ENCODE measurements at regions of chr16 and their contacts with region 1.

Region 1: DNA sequence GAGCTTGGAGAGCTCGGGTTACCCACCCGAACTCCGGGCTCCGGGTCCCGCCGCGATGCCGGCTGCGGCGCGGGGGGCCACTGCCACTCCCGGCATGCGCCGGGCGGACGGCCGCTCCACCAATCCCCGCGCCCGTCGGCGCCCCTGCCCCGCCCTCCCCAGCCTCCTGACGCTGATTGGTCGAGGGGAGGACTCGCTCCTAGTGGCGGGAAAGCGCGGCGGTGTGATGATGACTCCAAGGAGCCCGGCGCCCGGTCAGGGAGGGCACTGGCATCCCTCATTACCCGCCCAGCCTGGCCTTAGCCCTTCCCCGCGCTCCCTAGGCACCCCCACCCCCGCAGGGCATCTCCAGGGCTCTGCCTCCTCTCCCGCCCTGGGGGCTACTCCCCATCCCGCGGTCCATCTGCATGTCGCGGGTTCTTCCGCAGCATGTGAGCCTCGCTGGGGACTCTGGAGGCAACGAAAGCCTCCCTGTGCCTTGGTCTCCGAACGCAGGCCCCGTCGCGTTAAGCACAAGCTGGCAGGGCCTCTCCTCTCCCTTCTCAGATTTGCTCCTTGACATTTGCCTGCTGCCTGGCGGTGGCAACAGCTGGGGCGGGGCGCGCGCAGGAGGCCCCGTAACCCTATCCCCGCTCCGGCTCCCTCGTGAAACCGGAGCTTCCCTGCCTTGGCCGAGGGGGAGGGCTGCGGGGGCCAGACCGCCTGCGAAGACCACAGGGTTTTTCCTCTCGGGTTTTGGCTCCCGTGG is 1.7 kb downstream of the ATP2A1 start:
- DNase-seq: peak; percentile 94
- H3K4me3 ChIP-seq: peak overlapping the region; percentile 61
- H3K27ac ChIP-seq: peak overlapping the region; percentile 60
- H3K4me1 ChIP-seq: no peaks in the 10 kb centered on the region
- H3K27me3 ChIP-seq: no peaks in the 10 kb centered on the region
- CTCF ChIP-seq: no peak

Region 2: DNA sequence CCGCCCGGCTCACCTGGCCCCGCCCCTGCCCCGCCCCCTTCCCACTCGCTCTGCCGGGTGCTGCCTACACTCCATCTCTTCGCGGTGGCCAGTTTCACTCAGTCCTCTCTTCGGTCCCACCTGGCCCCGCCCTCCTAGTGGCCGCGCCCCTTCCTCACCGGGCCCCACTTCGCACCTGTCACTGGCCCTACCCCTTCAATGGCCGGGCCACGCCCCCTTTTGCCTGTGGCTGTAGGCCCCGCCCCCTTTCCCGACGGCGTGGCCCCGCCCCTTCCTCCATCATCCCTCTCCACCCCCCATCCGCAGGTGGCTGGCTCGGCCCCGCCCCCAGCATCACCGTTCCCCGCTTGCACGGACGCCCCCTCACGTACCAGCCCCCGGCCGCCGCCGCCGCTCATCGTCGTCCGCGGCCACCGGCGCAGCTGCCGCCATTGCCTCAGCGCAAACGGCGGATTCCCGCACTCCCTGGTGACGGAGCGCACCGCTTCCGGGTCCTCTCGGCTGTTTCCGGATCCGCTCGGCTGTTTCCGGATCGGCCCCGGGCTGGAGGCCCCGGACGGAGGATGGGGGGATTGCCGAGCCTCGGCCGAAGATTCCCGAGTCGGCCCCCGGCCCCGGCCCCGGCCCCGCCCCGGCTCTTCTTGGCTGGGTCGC is 44.8 kb after region 1 on chr16 and contains the start of gene RABEP2:
- CTCF ChIA-PET with region 1: interaction called, 6 read pairs
- POLR2A ChIA-PET with region 1: no interaction called
- intact Hi-C with region 1: loop called (anchors 10 kb)
- DNase-seq: peak; percentile 95
- H3K4me3 ChIP-seq: peak within 1 kb of the TSS; percentile 96
- H3K27ac ChIP-seq: peak within 1 kb of the TSS; percentile 97
- H3K4me1 ChIP-seq: no peaks in the 10 kb centered on the region
- H3K27me3 ChIP-seq: no peaks in the 10 kb centered on the region
- CTCF ChIP-seq: no peak
- total RNA-seq, gene RABEP2: 15.4 and 17.6 TPM in 2 replicates